ENCODE measurements at regions of chr5 and their contacts with region 1.

Region 1: DNA sequence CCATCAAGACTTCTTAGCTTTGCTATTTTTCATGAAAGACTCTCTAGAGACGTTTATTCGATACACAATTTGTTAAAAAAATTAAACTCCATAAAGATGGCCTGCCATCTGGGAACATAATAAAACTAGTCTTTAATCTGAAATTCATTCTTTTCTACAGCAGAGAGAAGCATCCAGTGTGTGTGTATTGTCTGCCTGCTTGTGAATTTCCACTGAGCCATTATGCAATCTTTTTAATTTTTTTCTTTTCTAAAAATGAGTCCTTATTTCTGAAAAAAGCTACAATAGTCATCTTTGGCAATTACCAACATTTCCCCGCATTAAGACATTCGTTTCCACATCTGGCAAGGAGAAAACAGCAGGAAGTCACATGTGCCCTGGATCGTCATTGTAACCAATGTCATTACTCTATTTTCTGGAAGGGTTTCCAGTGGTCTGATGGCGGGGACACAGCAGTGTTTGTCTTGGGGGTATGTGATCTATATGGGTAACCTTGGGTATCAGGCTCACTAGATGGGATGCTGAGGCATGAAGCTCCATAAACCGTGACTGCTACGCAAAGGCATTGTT is 263.1 kb downstream of the MSX2 start:
- DNase-seq: peak in 1 of 2 donors; percentile 68
- H3K4me3 ChIP-seq: no peak overlapping the region
- H3K27ac ChIP-seq: peak overlapping the region; percentile 67 to 75
- H3K4me1 ChIP-seq: peaks cover 11 to 23% of the 10 kb centered on the region in 2 donors
- H3K27me3 ChIP-seq: no peaks in the 10 kb centered on the region
- CTCF ChIP-seq: no peak

Region 2: GRCh38 chr5:174724491-174725260 is 262.9 kb before region 1 on chr5 and contains the start of gene MSX2:
- intact Hi-C with region 1: no loop called
- DNase-seq: peak; percentile 16 to 83
- H3K4me3 ChIP-seq: peak within 1 kb of the TSS; percentile 52 to 82
- H3K27ac ChIP-seq: peak within 1 kb of the TSS; percentile 39 to 59
- H3K4me1 ChIP-seq: no peaks in the 10 kb centered on the region
- H3K27me3 ChIP-seq: peaks cover 21% of the 10 kb centered on the region
- CTCF ChIP-seq: no peak
- total RNA-seq, gene MSX2: not detected

Region 3: DNA sequence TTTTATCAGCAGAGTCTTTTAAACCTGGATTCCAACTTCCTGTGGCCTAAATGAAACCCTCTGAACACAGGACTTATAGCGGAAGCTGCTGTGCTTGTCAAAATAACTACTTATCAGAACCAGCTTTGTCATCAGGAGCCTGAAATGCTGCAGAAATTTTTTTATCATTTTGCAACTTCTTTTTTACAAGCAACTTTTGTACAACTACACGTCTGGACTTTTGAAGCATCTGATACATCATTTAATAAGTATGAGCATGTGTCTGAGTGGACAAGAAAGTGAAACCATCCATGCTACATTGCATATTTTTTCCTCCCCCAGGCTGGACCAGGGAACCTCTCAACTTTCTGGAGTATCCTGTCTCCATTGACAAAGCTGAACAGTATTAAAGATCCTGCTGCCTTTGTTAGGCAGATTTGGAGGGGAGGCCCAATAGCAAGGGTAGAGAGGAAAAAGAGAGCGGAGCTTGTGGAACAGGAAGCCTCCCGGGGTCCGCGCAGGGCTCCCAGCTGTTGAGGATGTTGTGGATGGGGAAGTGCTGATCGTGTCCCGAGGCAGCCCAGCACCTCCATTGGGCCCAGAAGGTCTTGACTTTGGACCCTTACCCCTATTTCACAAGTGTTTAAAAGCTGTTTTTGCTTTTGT is 66.5 kb before region 1 on chr5:
- intact Hi-C with region 1: no loop called
- DNase-seq: no peak
- H3K4me3 ChIP-seq: no peak overlapping the region
- H3K27ac ChIP-seq: no peak overlapping the region
- H3K4me1 ChIP-seq: no peaks in the 10 kb centered on the region
- H3K27me3 ChIP-seq: no peaks in the 10 kb centered on the region
- CTCF ChIP-seq: no peak

Region 4: GRCh38 chr5:175045820-175046219 is 58.3 kb after region 1 on chr5:
- intact Hi-C with region 1: loop called (anchors 10 kb)
- DNase-seq: no peak
- H3K4me3 ChIP-seq: no peak overlapping the region
- H3K27ac ChIP-seq: peak overlapping the region; percentile 10 to 63
- H3K4me1 ChIP-seq: peaks cover 0 to 6% of the 10 kb centered on the region in 2 donors
- H3K27me3 ChIP-seq: no peaks in the 10 kb centered on the region
- CTCF ChIP-seq: no peak

Region 5: GRCh38 chr5:175059687-175060211 is 72.2 kb after region 1 on chr5:
- intact Hi-C with region 1: loop called (anchors 5 kb)
- DNase-seq: peak in 1 of 2 donors; percentile 78
- H3K4me3 ChIP-seq: peak overlapping the region; percentile 42 to 54
- H3K27ac ChIP-seq: peak overlapping the region; percentile 59 to 65
- H3K4me1 ChIP-seq: peaks cover 0 to 4% of the 10 kb centered on the region in 2 donors
- H3K27me3 ChIP-seq: no peaks in the 10 kb centered on the region
- CTCF ChIP-seq: no peak

Region 6: GRCh38 chr5:175214152-175214551 is 226.6 kb after region 1 on chr5:
- intact Hi-C with region 1: loop called (anchors 5 kb)
- DNase-seq: peak; percentile 54 to 92
- H3K4me3 ChIP-seq: no peak overlapping the region
- H3K27ac ChIP-seq: no peak overlapping the region
- H3K4me1 ChIP-seq: peaks cover 10 to 45% of the 10 kb centered on the region in 2 donors
- H3K27me3 ChIP-seq: no peaks in the 10 kb centered on the region
- CTCF ChIP-seq: no peak

Region 7: DNA sequence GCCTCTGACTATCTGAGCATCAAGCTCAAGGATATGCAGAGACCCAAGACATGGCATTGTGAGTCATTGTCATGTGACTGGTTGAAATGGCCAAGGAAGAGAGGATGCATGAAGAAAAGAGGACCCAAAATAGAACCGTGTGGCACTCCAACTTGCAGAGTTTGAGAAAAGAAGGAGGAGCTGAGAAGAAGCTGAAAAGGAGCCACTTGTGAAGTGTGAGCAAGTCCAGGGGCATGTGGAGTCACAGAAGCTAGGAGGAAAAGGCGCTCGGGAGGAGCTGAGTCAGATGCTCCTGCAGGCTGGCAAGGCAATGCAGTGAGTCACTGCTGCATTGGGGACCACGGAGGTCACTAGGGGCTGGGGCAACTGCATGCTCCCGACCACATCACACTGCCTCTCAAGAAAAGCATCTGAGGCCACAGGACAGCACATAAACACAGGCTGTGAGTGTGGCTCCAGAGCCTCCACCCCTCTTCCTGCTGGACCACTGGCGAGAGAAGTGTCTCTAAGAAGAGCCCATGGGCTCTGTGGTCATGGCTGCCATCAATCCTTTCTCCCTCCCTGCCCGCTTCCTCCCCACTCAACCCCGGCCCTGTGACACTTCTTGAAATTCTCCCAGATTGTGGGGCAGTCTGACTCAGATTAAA is 258.8 kb after region 1 on chr5:
- intact Hi-C with region 1: loop called (anchors 5 kb)
- DNase-seq: peak; percentile 15 to 85
- H3K4me3 ChIP-seq: no peak overlapping the region
- H3K27ac ChIP-seq: peak overlapping the region; percentile 69 to 77
- H3K4me1 ChIP-seq: peaks cover 0 to 9% of the 10 kb centered on the region in 2 donors
- H3K27me3 ChIP-seq: no peaks in the 10 kb centered on the region
- CTCF ChIP-seq: no peak